Endothelial cell of umbilical vein (primary cell): ENCODE measurements at regions of chr17 and their contacts with region 1.

Region 1: DNA sequence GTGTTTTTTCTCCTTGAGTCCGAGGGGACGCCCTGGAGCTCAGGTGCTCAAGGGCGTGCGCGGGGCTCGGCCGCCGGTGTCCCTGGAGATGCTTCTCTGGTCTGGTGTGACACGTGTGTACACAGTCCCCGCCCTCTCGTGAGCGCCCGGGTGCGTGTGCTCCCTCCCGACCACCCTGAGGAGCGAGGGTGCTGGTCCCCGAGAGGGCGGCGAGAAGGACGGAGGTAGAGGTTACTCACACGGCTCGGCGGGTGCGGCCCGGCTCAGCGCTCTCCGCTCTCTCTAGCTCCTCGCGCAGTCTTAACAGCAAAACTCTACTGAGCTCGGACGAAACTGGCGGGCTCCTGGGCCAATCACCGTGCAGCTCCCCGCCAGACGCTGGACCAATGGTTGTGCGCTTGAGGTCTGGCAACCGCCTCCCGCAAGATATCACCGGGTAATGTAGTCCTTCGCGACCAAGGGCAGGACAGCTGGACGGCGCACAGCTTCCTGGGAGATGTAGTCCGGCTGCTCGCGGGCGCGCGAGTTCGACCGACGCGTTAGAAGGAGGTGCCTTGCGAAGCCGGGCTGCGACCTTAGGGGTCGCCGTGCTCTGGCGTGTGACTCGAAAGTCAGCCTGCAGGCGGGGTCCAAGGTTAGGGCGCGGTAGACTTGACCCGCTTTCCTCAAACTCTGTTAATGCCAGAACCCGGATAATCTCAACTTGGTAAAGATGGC is at the start of gene SLC25A19:
- DNase-seq: peak; percentile 100
- H3K4me3 ChIP-seq: peak within 1 kb of the TSS; percentile 66 to 85 (median 75)
- H3K27ac ChIP-seq: peak within 1 kb of the TSS; percentile 86
- H3K4me1 ChIP-seq: peaks cover 8% of the 10 kb centered on the region
- H3K27me3 ChIP-seq: no peaks in the 10 kb centered on the region
- CTCF ChIP-seq: no peak
- POLR2A ChIP-seq: peak; percentile 9
- total RNA-seq, gene SLC25A19: 16.8 and 20.9 TPM in 2 replicates

Region 2: DNA sequence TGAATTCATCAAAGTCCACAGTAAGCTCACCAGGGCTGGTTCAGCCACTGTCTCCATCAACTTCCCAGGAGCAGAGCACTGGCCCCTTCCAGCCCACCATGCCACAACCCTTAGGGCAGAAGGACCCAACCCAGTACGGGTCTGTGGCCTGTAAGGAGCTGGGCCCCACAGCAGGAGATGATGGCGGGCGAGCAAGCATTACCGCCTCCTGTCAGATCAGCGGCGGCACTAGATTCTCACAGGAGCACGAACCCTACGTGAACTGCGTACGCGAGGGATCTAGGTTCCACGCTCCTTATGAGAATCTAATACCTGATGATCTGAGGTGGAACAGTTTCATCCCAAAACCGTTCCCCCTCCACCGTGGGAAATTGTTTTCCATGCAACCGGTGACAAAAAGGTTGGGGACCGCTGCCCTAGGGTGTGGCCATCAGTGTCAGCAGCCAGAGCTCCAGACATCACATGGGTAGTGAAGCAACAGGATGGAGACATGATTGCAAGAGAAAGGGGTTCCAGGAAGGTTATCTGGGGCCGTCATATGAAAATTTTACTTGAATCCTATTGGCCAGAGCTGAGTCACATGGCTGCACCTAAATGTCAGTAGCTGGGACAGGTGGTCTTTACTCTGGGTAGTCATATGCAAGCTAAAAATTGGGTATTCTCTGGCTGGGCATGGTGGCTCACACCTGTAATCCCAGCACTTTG is 12.4 kb after region 1 on chr17:
- CTCF ChIA-PET with region 1: no interaction called
- POLR2A ChIA-PET with region 1: no interaction called
- dilution Hi-C with region 1: no loop called
- intact Hi-C with region 1: no loop called
- DNase-seq: no peak
- H3K4me3 ChIP-seq: no peak overlapping the region
- H3K27ac ChIP-seq: no peak overlapping the region
- H3K4me1 ChIP-seq: no peaks in the 10 kb centered on the region
- H3K27me3 ChIP-seq: no peaks in the 10 kb centered on the region
- CTCF ChIP-seq: no peak
- POLR2A ChIP-seq: no peak

Region 3: GRCh38 chr17:75405365-75406221 is 116.3 kb after region 1 on chr17 and contains the start of gene GRB2:
- CTCF ChIA-PET with region 1: interaction called, 8 read pairs
- POLR2A ChIA-PET with region 1: interaction called, 4 read pairs
- dilution Hi-C with region 1: no loop called
- intact Hi-C with region 1: loop called (anchors 1 kb)
- DNase-seq: peak; percentile 97
- H3K4me3 ChIP-seq: peak within 1 kb of the TSS; percentile 78 to 97 (median 96)
- H3K27ac ChIP-seq: peak within 1 kb of the TSS; percentile 54
- H3K4me1 ChIP-seq: peaks cover 12% of the 10 kb centered on the region
- H3K27me3 ChIP-seq: peaks cover 2% of the 10 kb centered on the region in 2 experiments
- CTCF ChIP-seq: no peak
- POLR2A ChIP-seq: peak; percentile 90
- total RNA-seq, gene GRB2: 93.9 and 94.8 TPM in 2 replicates

Region 4: DNA sequence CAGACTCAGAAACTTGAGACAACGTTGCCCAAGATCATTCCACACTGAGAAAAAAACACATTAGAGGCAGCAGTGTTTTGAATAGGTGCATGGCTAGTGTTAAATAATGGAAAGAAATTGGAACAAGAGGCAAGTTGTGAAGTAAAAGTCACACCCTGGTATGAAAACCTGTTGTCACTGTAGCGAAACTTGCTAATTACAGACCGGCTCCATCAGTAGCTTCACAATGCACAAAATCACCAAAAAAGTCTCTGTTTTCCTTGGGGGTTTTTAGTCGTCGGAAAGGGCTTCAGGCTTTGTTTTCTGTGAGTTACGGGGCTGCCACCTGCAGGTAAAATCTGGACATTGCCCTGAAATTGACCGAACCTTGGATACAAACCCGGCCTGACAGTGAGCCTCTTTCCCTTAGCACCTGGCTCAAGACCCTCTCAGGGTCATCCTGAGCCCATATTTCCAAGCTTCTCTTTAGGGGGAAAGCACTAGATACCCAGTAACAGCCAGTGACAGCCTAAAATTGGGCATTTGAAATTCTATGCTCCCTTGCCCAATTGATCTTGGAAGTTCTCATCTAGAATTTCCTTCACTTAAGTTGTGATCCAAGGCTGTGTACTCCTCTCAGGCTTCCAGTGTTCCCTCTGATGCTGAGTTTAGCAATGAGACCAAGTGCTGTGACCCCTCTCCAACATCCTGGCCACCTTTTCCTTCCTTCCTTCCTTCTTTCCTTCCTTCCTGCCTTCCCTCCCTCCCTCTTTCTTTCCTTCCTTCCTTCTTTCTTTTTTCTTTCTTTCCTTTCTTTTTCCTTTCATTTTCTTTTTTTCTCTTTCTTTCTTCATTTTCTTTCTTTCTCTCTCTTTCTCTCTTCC is 123.4 kb after region 1 on chr17:
- CTCF ChIA-PET with region 1: interaction called, 14 read pairs
- POLR2A ChIA-PET with region 1: no interaction called
- dilution Hi-C with region 1: no loop called
- intact Hi-C with region 1: no loop called
- DNase-seq: peak; percentile 74
- H3K4me3 ChIP-seq: peak overlapping the region in 1 of 3 experiments; percentile 27
- H3K27ac ChIP-seq: no peak overlapping the region
- H3K4me1 ChIP-seq: peaks cover 5% of the 10 kb centered on the region
- H3K27me3 ChIP-seq: peaks cover 2 to 3% of the 10 kb centered on the region in 2 experiments
- CTCF ChIP-seq: peak; percentile 72 to 77
- POLR2A ChIP-seq: no peak